Caco-2 (cell line): ENCODE measurements at regions of chr6 and their contacts with region 1.

Region 1: GRCh38 chr6:163413345-163414116 is 987 bp upstream of the QKI start:
- DNase-seq: peak; percentile 81 to 91
- H3K4me3 ChIP-seq: peak overlapping the region; percentile 83
- H3K4me3 Mint-ChIP-seq: peak overlapping the region; percentile 87
- H3K27ac Mint-ChIP-seq: peak overlapping the region; percentile 85
- H3K4me1 ChIP-seq: peaks cover 35% of the 10 kb centered on the region
- H3K4me1 Mint-ChIP-seq: peaks cover 25% of the 10 kb centered on the region
- H3K27me3 ChIP-seq: no peaks in the 10 kb centered on the region
- H3K27me3 Mint-ChIP-seq: no peaks in the 10 kb centered on the region
- CTCF ChIP-seq: no peak

Region 2: GRCh38 chr6:162856885-162857284 is 556.6 kb before region 1 on chr6:
- CTCF ChIA-PET with region 1: no interaction called
- POLR2A ChIA-PET with region 1: no interaction called
- intact Hi-C with region 1: loop called (anchors 2 kb)
- DNase-seq: peak in 1 of 2 experiments; percentile 36
- H3K4me3 ChIP-seq: no peak overlapping the region
- H3K4me3 Mint-ChIP-seq: no peak overlapping the region
- H3K27ac Mint-ChIP-seq: no peak overlapping the region
- H3K4me1 ChIP-seq: no peaks in the 10 kb centered on the region
- H3K4me1 Mint-ChIP-seq: no peaks in the 10 kb centered on the region
- H3K27me3 ChIP-seq: no peaks in the 10 kb centered on the region
- H3K27me3 Mint-ChIP-seq: peaks cover 6% of the 10 kb centered on the region
- CTCF ChIP-seq: peak; percentile 31 to 61

Region 3: GRCh38 chr6:163180874-163181541 is 232.5 kb before region 1 on chr6:
- CTCF ChIA-PET with region 1: no interaction called
- POLR2A ChIA-PET with region 1: no interaction called
- intact Hi-C with region 1: loop called (anchors 1 kb)
- DNase-seq: peak; percentile 86 to 88
- H3K4me3 ChIP-seq: no peak overlapping the region
- H3K4me3 Mint-ChIP-seq: peak overlapping the region; percentile 33
- H3K27ac Mint-ChIP-seq: peak overlapping the region; percentile 89
- H3K4me1 ChIP-seq: peaks cover 6% of the 10 kb centered on the region
- H3K4me1 Mint-ChIP-seq: no peaks in the 10 kb centered on the region
- H3K27me3 ChIP-seq: no peaks in the 10 kb centered on the region
- H3K27me3 Mint-ChIP-seq: no peaks in the 10 kb centered on the region
- CTCF ChIP-seq: peak; percentile 62 to 96

Region 4: DNA sequence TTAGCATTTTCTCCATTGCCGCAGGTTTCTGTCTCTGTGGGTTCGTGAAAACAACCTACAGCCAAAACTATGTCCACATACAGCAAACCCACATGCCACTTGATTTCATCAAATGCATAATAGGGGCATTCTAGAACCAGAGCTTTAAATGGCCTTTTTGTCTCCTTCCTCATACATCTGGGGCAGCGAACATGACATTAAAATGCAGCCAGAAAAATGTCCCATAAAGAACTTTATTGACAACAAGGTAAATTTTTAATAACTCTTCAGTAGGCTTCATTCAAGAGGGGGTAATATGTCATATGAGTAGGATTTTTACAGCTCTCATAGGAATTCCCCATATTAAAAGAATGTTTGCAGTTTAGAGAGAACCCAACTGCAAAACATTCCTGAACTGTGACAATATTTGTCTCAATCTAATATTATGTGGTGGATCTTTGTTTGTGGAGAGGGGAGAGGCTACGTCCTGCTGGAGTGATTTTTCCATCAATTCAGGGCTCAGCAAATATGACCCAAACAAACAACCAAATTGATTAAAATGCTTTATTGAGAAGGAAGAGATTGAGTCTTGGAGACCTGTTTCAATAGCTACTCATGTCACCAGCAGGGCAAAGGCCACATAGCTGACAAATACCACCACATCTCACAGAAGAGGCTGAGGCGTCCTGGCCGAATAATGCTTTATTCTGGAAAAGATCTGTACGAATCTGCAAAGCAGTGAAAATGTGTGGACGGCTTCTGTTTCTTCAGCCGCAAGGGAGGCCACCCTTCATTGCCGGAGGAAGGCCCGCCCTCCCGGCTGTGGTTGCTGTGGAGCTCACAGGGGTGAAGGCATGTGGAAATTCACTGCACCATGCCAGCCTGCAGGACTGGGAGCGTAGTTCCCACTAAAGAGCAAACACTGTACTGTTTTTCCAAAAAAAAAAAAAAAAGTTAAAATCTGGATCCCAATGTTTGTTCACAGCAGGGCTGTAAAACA is 88.8 kb before region 1 on chr6:
- CTCF ChIA-PET with region 1: no interaction called
- POLR2A ChIA-PET with region 1: interaction called, 6 read pairs
- intact Hi-C with region 1: loop called (anchors 1 kb)
- DNase-seq: peak; percentile 47 to 50
- H3K4me3 ChIP-seq: no peak overlapping the region
- H3K4me3 Mint-ChIP-seq: peak overlapping the region; percentile 61
- H3K27ac Mint-ChIP-seq: peak overlapping the region; percentile 87
- H3K4me1 ChIP-seq: peaks cover 17% of the 10 kb centered on the region; the same call in 1 of the 2 replicates
- H3K4me1 Mint-ChIP-seq: peaks cover 13% of the 10 kb centered on the region
- H3K27me3 ChIP-seq: no peaks in the 10 kb centered on the region
- H3K27me3 Mint-ChIP-seq: no peaks in the 10 kb centered on the region
- CTCF ChIP-seq: no peak

Region 5: DNA sequence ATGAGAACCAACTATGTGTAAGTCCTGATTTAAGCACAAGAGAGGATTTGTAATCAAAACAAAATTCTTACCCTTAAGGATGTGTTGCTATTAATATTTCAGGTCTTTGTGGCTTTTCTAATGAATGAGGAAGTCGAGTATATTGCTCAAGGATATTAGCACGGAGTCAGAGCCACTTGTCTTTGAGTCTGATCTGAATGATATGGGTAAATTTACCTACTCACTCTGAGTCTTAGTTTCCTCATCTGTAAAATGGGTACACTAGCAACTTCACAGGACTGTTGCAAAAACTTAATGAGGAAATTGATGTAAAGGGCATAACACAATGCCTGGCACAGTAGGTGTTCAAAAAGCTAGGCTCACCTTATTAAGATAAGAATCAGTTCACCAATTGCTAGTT is 29.0 kb before region 1 on chr6:
- CTCF ChIA-PET with region 1: no interaction called
- POLR2A ChIA-PET with region 1: interaction called, 10 read pairs
- intact Hi-C with region 1: no loop called
- DNase-seq: no peak
- H3K4me3 ChIP-seq: no peak overlapping the region
- H3K4me3 Mint-ChIP-seq: no peak overlapping the region
- H3K27ac Mint-ChIP-seq: no peak overlapping the region
- H3K4me1 ChIP-seq: no peaks in the 10 kb centered on the region
- H3K4me1 Mint-ChIP-seq: no peaks in the 10 kb centered on the region
- H3K27me3 ChIP-seq: no peaks in the 10 kb centered on the region
- H3K27me3 Mint-ChIP-seq: no peaks in the 10 kb centered on the region
- CTCF ChIP-seq: no peak

Region 6: GRCh38 chr6:163554663-163555062 is 141.1 kb after region 1 on chr6:
- CTCF ChIA-PET with region 1: interaction called, 5 read pairs
- POLR2A ChIA-PET with region 1: no interaction called
- intact Hi-C with region 1: loop called (anchors 1 kb)
- DNase-seq: peak; percentile 46 to 55
- H3K4me3 ChIP-seq: no peak overlapping the region
- H3K4me3 Mint-ChIP-seq: no peak overlapping the region
- H3K27ac Mint-ChIP-seq: no peak overlapping the region
- H3K4me1 ChIP-seq: no peaks in the 10 kb centered on the region
- H3K4me1 Mint-ChIP-seq: no peaks in the 10 kb centered on the region
- H3K27me3 ChIP-seq: no peaks in the 10 kb centered on the region
- H3K27me3 Mint-ChIP-seq: no peaks in the 10 kb centered on the region
- CTCF ChIP-seq: peak; percentile 38 to 49

Region 7: GRCh38 chr6:163620670-163621330 is 207.3 kb after region 1 on chr6:
- CTCF ChIA-PET with region 1: no interaction called
- POLR2A ChIA-PET with region 1: no interaction called
- intact Hi-C with region 1: no loop called
- DNase-seq: no peak
- H3K4me3 ChIP-seq: no peak overlapping the region
- H3K4me3 Mint-ChIP-seq: no peak overlapping the region
- H3K27ac Mint-ChIP-seq: no peak overlapping the region
- H3K4me1 ChIP-seq: no peaks in the 10 kb centered on the region
- H3K4me1 Mint-ChIP-seq: no peaks in the 10 kb centered on the region
- H3K27me3 ChIP-seq: no peaks in the 10 kb centered on the region
- H3K27me3 Mint-ChIP-seq: no peaks in the 10 kb centered on the region
- CTCF ChIP-seq: no peak

Region 8: GRCh38 chr6:163904186-163904585 is 490.7 kb after region 1 on chr6:
- CTCF ChIA-PET with region 1: no interaction called
- POLR2A ChIA-PET with region 1: no interaction called
- intact Hi-C with region 1: no loop called
- DNase-seq: no peak
- H3K4me3 ChIP-seq: no peak overlapping the region
- H3K4me3 Mint-ChIP-seq: no peak overlapping the region
- H3K27ac Mint-ChIP-seq: no peak overlapping the region
- H3K4me1 ChIP-seq: no peaks in the 10 kb centered on the region
- H3K4me1 Mint-ChIP-seq: no peaks in the 10 kb centered on the region
- H3K27me3 ChIP-seq: no peaks in the 10 kb centered on the region
- H3K27me3 Mint-ChIP-seq: peaks cover 8% of the 10 kb centered on the region
- CTCF ChIP-seq: no peak

Region 9: GRCh38 chr6:163956571-163957407 is 543.3 kb after region 1 on chr6:
- CTCF ChIA-PET with region 1: no interaction called
- POLR2A ChIA-PET with region 1: no interaction called
- intact Hi-C with region 1: loop called (anchors 1 kb)
- DNase-seq: peak; percentile 76 to 78
- H3K4me3 ChIP-seq: no peak overlapping the region
- H3K4me3 Mint-ChIP-seq: no peak overlapping the region
- H3K27ac Mint-ChIP-seq: no peak overlapping the region
- H3K4me1 ChIP-seq: no peaks in the 10 kb centered on the region
- H3K4me1 Mint-ChIP-seq: no peaks in the 10 kb centered on the region
- H3K27me3 ChIP-seq: no peaks in the 10 kb centered on the region
- H3K27me3 Mint-ChIP-seq: peaks cover 4% of the 10 kb centered on the region
- CTCF ChIP-seq: peak; percentile 64 to 80